Transverse colon (tissue), 4 donors: ENCODE measurements at regions of chr11 and their contacts with region 1.

Region 1: DNA sequence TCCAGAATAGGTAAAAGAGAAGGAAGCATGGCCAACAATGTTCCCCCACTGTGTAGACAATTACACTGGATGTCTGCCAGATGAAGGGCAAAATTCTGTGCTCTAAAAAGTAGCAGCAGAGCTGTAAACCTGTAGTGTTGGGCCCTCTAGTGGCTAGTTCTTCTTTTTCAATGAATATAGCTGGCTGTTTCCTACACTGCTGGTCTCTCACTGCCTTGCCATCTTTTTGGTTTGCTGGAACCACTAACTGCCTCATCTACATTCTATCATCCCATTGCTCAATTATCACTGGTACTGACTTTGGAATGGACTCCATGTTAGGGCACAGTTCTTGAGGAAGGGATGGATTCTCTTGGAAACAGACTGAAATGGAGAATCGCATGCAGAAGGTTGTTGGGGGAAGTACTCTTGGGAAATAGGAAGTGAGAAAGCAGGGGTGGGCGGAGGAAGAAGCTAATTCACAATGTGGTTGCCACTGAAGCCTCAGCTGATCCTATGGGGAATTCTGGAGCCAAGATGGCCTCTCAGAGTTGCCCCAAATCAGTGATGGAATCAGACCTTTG is 17.9 kb downstream of the KCNE3 start:
- DNase-seq: peak; percentile 39
- H3K4me3 ChIP-seq: no peak overlapping the region
- H3K27ac ChIP-seq: no peak overlapping the region
- H3K4me1 ChIP-seq: peaks cover 2 to 16% (median 8%) of the 10 kb centered on the region in 4 donors
- H3K27me3 ChIP-seq: no peaks in the 10 kb centered on the region
- CTCF ChIP-seq: peak; percentile 55 to 82 (median 70)
- EP300 ChIP-seq: no peak
- POLR2A ChIP-seq: no peak

Region 2: GRCh38 chr11:74212533-74212932 is 236.9 kb before region 1 on chr11:
- in situ Hi-C with region 1: no loop called
- intact Hi-C with region 1: no loop called
- DNase-seq: no peak
- H3K4me3 ChIP-seq: no peak overlapping the region
- H3K27ac ChIP-seq: no peak overlapping the region
- H3K4me1 ChIP-seq: no peaks in the 10 kb centered on the region
- H3K27me3 ChIP-seq: no peaks in the 10 kb centered on the region
- CTCF ChIP-seq: no peak
- EP300 ChIP-seq: no peak
- POLR2A ChIP-seq: no peak

Region 3: GRCh38 chr11:74255741-74256369 is 193.6 kb before region 1 on chr11:
- in situ Hi-C with region 1: loop called (anchors 5 to 10 kb)
- intact Hi-C with region 1: loop called (anchors 2 kb)
- DNase-seq: peak; percentile 47
- H3K4me3 ChIP-seq: no peak overlapping the region
- H3K27ac ChIP-seq: no peak overlapping the region
- H3K4me1 ChIP-seq: peaks cover 0 to 7% (median 2%) of the 10 kb centered on the region in 4 donors
- H3K27me3 ChIP-seq: no peaks in the 10 kb centered on the region
- CTCF ChIP-seq: peak; percentile 89 to 94 (median 92)
- EP300 ChIP-seq: no peak
- POLR2A ChIP-seq: no peak

Region 4: DNA sequence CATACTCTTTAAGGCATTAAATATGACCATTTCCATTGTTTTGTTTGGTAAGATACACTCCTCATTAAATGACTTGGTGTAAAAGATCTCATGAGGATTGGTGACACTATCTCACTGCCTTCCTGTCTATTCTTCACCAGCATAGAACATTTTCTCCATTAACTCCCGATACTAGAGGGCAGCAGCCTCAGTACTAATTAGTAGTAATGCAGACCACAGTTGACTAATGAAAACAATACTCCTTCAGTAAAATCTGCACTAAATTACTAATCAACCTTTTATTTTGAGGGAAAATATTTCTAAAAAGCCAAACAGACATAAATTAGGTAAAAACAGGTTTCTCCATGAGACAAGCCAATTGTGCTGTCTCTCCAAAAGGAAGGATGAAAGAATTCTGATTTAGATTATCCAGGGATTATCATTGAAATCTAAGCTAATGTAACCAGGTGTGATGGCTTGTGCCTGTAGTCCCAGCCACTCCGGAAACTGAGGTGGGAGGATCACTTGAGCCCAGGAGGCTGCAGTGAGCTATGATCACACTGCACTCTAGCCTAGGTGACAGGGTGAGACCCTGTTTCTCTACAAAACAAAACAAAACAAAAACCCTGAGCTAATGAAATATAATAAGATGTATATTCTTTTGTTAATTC is 60.6 kb before region 1 on chr11:
- in situ Hi-C with region 1: loop called (anchors 5 to 10 kb)
- intact Hi-C with region 1: loop called (anchors 1 kb)
- DNase-seq: peak; percentile 58
- H3K4me3 ChIP-seq: no peak overlapping the region
- H3K27ac ChIP-seq: no peak overlapping the region
- H3K4me1 ChIP-seq: peaks cover 0 to 5% (median 0%) of the 10 kb centered on the region in 4 donors
- H3K27me3 ChIP-seq: no peaks in the 10 kb centered on the region
- CTCF ChIP-seq: peak; percentile 68 to 75 (median 71)
- EP300 ChIP-seq: no peak
- POLR2A ChIP-seq: no peak

Region 5: GRCh38 chr11:74559934-74560309 is 110.5 kb after region 1 on chr11:
- in situ Hi-C with region 1: loop called in 2 of 4 experiments (anchors 10 kb)
- intact Hi-C with region 1: no loop called
- DNase-seq: no peak
- H3K4me3 ChIP-seq: no peak overlapping the region
- H3K27ac ChIP-seq: no peak overlapping the region
- H3K4me1 ChIP-seq: no peaks in the 10 kb centered on the region
- H3K27me3 ChIP-seq: no peaks in the 10 kb centered on the region
- CTCF ChIP-seq: no peak
- EP300 ChIP-seq: no peak
- POLR2A ChIP-seq: no peak

Region 6: GRCh38 chr11:74739546-74740270 is 290.3 kb after region 1 on chr11:
- in situ Hi-C with region 1: loop called in 3 of 4 experiments (anchors 25 kb)
- intact Hi-C with region 1: loop called (anchors 5 kb)
- DNase-seq: peak; percentile 45
- H3K4me3 ChIP-seq: no peak overlapping the region
- H3K27ac ChIP-seq: no peak overlapping the region
- H3K4me1 ChIP-seq: no peaks in the 10 kb centered on the region
- H3K27me3 ChIP-seq: peaks cover 11% of the 10 kb centered on the region
- CTCF ChIP-seq: peak; percentile 74 to 90 (median 88)
- EP300 ChIP-seq: no peak
- POLR2A ChIP-seq: no peak